OCI-LY7 (cell line): ENCODE measurements at regions of chr9 and their contacts with region 1.

Region 1: DNA sequence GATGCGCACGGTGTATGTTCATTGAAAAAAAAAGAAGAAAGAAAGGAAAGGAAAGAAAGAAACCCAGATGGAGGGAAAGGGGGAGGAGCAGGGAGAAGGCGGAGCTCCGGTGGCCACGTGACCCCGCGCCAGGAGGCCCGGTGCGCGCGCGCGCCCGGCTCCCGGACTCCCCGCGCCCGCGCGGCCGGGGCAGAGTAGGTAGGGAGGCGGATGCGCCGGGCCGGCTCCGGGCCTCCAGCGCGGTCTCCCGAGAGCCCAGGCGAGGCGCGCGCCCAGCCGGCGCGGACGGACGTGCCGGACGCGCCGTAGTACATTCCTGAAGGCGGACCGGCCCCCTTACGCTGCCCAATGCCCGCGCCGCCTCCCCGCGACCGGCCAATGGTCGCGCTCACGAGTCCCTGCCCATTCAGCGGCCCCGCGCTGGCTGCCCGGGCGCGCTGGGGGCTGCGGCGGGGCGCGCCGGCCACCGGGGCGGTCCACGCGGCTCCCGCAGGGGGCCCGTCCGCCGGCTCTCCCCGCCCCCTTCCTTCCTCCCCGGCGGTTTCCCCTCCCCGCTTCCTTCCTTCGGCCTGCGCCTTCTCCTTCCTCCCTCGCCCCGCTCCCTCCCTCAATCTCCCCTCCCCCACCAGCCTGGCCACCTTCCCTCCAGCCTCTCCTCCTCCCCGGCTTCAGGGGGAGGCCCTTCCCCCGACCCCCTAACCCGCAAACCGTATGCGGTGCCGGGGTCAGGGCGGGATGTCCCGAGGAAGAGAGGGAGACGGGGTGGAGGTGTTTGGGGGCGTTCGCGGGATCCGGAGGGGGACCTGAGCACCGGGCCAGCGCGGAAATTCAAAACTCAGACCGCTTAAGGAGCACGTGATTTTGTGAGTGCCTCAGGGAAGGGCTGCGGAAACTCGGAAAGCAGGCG is 5.8 kb downstream of the PTCH1 start:
- DNase-seq: peak; percentile 91
- H3K4me3 ChIP-seq: peak overlapping the region; percentile 82
- H3K27ac ChIP-seq: peak overlapping the region; percentile 51
- H3K4me1 ChIP-seq: peaks cover 16% of the 10 kb centered on the region
- CTCF ChIP-seq: no peak

Region 2: GRCh38 chr9:95317119-95317892 is 193.7 kb before region 1 on chr9 and contains the start of gene FANCC:
- CTCF ChIA-PET with region 1: no interaction called
- POLR2A ChIA-PET with region 1: interaction called, 3 read pairs
- intact Hi-C with region 1: loop called (anchors 1 kb)
- DNase-seq: peak; percentile 91
- H3K4me3 ChIP-seq: peak within 1 kb of the TSS; percentile 79
- H3K27ac ChIP-seq: peak within 1 kb of the TSS; percentile 84
- H3K4me1 ChIP-seq: peaks cover 14% of the 10 kb centered on the region
- CTCF ChIP-seq: 0 out of 2 replicates have a peak, but pooled peaks have one; percentile 24
- total RNA-seq, gene FANCC: 12.3 and 13.9 TPM in 2 replicates

Region 3: DNA sequence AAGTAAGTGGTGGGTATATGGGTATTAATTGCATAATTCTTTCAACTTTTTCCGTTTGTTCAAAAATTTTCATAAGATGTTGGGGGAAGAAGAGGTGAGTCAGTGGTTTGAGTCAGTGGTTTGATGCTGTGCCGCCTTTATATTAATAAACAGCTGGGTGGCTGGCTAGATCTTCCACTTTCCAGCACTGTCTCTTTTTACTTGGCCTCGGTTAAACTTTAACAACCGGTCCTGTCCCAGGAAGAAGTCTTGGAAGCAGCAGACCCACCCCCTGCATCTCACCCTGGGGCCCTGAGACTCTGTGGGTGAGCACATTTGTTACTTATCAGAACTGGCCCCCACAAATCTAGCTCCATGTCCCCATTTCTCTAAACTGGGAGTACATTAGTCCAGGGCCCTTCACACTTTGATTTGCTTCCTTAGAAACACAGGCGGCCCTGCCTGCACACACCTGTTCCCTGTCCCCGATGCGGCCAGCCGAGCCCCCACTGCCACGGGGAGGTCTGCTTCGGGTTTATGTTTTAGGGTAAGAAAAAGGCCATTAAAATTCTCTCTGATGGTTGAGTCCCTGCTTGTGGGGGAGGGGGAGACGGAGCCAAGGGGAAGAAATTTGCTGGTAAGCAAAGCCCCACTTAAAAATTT is 84.9 kb before region 1 on chr9:
- CTCF ChIA-PET with region 1: no interaction called
- POLR2A ChIA-PET with region 1: interaction called, 3 read pairs
- intact Hi-C with region 1: loop called (anchors 2 kb)
- DNase-seq: peak; percentile 47
- H3K4me3 ChIP-seq: peak overlapping the region; percentile 71
- H3K27ac ChIP-seq: peak overlapping the region; percentile 60
- H3K4me1 ChIP-seq: peaks cover 14% of the 10 kb centered on the region
- CTCF ChIP-seq: no peak

Region 4: GRCh38 chr9:95494416-95495371 is 16.3 kb before region 1 on chr9:
- CTCF ChIA-PET with region 1: no interaction called
- POLR2A ChIA-PET with region 1: interaction called, 10 read pairs
- intact Hi-C with region 1: loop called (anchors 1 kb)
- DNase-seq: peak; percentile 98
- H3K4me3 ChIP-seq: peak overlapping the region; percentile 63
- H3K27ac ChIP-seq: peak overlapping the region; percentile 95
- H3K4me1 ChIP-seq: peaks cover 66% of the 10 kb centered on the region
- CTCF ChIP-seq: no peak

Region 5: GRCh38 chr9:95834281-95834907 is 323.4 kb after region 1 on chr9:
- CTCF ChIA-PET with region 1: no interaction called
- POLR2A ChIA-PET with region 1: no interaction called
- intact Hi-C with region 1: no loop called
- DNase-seq: no peak
- H3K4me3 ChIP-seq: no peak overlapping the region
- H3K27ac ChIP-seq: no peak overlapping the region
- H3K4me1 ChIP-seq: no peaks in the 10 kb centered on the region
- CTCF ChIP-seq: no peak

Region 6: DNA sequence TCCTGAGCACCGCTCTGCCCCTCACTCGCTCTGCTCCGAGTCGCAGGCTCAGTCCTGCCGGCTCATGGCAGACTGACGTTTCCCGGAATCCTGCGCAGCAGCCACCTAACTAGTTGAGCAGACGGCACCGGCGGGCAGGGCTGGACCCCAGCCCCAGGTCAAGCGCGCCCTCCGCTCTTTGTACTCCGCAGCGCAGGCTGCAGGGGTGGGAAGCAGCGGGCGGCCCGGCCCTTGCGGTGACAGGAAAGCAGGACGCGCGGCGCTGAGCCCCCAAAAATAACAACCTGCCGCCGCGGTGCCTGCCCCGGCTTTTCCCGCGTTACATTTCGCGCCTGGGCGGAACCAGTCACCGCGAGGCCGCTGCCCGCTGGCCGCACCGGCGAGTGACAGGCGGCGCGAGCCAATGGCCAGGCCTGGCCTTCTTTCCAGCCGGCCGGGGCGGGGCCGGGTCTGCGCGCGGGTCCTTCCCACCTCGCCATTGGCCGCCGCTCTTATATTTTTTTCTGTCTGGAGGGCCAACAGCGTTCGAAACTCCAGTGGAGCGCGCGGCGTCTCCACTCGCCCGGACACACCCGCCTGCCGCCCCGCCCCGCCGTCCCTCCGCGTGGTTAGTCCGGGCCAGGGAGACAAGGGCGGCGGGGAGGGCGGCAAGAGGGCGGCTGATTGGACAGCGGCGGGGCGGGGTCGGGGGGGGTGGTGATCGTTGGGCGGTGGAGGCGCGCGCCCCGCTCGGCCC is 907.3 kb after region 1 on chr9 and contains the start of gene ZNF367:
- CTCF ChIA-PET with region 1: no interaction called
- POLR2A ChIA-PET with region 1: no interaction called
- intact Hi-C with region 1: loop called (anchors 5 kb)
- DNase-seq: peak; percentile 95
- H3K4me3 ChIP-seq: peak within 1 kb of the TSS; percentile 99
- H3K27ac ChIP-seq: peak within 1 kb of the TSS; percentile 99
- H3K4me1 ChIP-seq: peaks cover 48% of the 10 kb centered on the region
- CTCF ChIP-seq: no peak
- total RNA-seq, gene ZNF367: 33.3 and 35.1 TPM in 2 replicates